H1 (cell line): ENCODE measurements at regions of chr1 and their contacts with region 1.

Region 1: DNA sequence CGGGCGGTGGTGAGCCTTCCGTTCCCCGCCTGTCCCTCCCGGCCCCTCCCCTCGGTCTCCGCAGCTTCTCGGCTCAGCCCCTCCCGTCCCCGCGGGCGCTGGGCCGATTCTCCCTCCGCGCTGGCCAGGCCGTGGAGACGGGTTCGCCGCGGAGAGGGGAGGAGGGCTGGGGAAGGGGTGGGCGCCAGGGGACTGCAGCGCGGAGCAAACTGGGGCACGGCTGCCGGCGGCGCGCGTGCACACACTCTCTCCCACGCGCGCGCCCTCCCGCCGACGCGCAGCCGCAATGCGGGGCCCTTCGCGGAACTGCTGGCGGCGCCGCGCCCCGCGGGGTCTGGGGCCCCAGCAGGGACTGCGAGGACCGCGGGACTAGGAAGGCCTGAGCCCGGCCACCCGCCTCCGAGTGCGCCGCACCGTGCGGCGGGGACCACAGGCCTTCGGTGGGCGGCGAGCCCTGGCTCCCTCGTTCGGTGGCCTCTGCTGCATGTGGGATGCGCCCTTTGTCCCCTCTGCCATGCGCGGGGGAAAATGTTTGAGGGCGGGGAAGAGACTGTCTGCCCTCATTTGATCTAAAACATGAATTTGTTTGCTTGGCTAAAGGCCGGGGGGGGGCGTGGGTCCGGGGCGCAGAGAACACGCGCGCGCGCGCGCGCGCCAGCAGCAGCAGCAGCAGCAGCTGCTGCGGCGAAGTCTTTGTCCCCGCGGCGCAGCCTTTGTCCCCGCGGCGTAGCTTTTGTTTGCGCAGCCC is 90.7 kb upstream of the VAMP3 start:
- DNase-seq: peak in 1 of 2 experiments; percentile 63
- H3K4me3 ChIP-seq: peak overlapping the region; percentile 47 to 74 (median 54)
- H3K27ac ChIP-seq: no peak overlapping the region
- H3K4me1 ChIP-seq: peaks cover 0 to 3% (median 3%) of the 10 kb centered on the region in 4 experiments; a peak in 4 of 7 replicates
- H3K27me3 ChIP-seq: peaks cover 0 to 20% (median 14%) of the 10 kb centered on the region in 4 experiments; a peak in 6 of 7 replicates
- CTCF ChIP-seq: no peak
- EP300 ChIP-seq: no peak
- POLR2A ChIP-seq: peak in 1 of 2 experiments; percentile 10; a peak in 1 of 3 replicates
- RAD21 ChIP-seq: no peak

Region 2: GRCh38 chr1:7690496-7691182 is 10.3 kb after region 1 on chr1:
- CTCF ChIA-PET with region 1: interaction called, 6 read pairs
- POLR2A ChIA-PET with region 1: interaction called, 23 read pairs
- DNase-seq: no peak
- H3K4me3 ChIP-seq: no peak overlapping the region
- H3K27ac ChIP-seq: no peak overlapping the region
- H3K4me1 ChIP-seq: peaks cover 0 to 9% (median 0%) of the 10 kb centered on the region in 4 experiments; a peak in 1 of 7 replicates
- H3K27me3 ChIP-seq: no peaks in the 10 kb centered on the region; a peak in 1 of 7 replicates
- CTCF ChIP-seq: no peak
- EP300 ChIP-seq: no peak
- POLR2A ChIP-seq: no peak
- RAD21 ChIP-seq: no peak

Region 3: DNA sequence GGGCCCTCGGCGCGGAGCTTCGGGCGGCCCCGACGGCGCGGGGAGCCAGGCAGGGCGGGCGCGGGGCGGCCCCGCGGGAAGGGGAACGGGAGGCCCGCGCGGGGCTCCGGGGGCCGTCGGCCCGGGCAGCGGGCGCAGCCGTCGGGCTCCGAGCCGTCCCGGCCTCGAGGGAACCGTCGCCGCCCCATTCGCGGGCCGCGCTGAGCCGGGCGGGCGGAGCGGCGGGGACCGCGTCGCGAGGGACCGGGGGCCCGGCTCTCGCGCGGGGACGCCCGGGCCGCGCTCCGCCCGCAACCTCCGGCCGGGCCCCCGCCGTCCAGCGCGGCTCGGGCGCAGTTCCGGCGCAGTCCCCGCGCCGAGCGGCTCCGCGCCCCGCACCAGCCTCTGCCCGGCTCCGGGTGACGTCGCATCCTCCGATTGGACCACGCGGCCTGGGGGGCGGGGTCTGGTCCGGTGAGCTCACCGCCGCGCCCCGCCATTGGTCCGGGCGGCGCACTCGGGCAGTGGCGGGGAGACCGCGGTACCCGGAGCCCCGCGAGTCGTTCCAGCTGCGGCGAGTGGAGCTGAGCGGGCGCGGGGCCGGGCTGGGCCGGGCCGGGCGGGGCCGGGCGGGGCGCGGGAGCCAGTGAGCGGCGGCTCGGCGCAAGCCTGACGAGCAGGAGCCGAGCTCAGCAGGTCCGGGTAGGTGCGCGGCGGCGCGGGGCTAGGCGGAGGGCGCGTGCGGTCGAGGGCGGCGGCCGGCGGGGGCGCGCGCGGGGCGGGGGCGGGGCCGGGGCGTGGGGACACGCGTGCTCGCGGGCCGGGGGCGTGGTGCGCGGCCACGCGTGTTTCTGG is 24.1 kb after region 1 on chr1:
- CTCF ChIA-PET with region 1: interaction called, 5 read pairs
- POLR2A ChIA-PET with region 1: interaction called, 20 read pairs
- DNase-seq: peak; percentile 75 to 97
- H3K4me3 ChIP-seq: peak overlapping the region in 3 of 4 experiments; percentile 16 to 62 (median 56); a peak in 5 of 8 replicates
- H3K27ac ChIP-seq: no peak overlapping the region
- H3K4me1 ChIP-seq: peaks cover 2 to 16% (median 10%) of the 10 kb centered on the region in 4 experiments; a peak in 6 of 7 replicates
- H3K27me3 ChIP-seq: peaks cover 0 to 21% (median 15%) of the 10 kb centered on the region in 4 experiments; a peak in 5 of 7 replicates
- CTCF ChIP-seq: no peak
- EP300 ChIP-seq: no peak
- POLR2A ChIP-seq: no peak
- RAD21 ChIP-seq: no peak